HepG2 (cell line): ENCODE measurements at regions of chr12 and their contacts with region 1.

Region 1: DNA sequence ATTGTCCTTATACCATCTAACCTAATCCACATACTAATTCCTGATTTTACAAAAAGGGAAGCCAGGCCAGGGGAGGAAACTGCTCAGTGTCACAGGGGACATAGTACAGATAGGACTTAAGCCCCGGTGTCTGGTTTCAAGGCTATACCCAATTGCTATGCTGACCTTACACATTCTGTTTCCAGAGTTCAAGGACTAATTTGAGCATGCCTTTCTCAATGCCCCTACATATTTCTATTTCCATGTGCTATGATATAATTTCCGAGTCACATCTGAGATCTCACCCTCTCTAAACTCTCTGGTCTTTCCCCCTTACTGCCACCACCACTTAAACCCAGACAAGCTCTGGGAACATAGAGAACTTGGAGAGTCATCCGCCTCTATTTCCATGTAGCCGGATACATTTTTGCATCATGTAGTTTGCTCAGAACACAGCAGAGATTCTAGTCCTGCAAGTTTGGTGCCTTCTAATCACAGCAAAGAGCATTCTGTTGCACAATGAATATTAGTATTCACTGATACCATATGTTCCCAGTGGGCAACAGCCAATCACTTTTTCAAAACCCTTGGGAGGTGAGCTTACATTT is 34.2 kb downstream of the PPM1H start:
- DNase-seq: peak; percentile 91
- ATAC-seq: peak; percentile 94
- H3K4me3 ChIP-seq: no peak overlapping the region
- H3K27ac ChIP-seq: peak overlapping the region; percentile 87
- H3K4me1 ChIP-seq: peaks cover 66% of the 10 kb centered on the region
- H3K27me3 ChIP-seq: no peaks in the 10 kb centered on the region
- CTCF ChIP-seq: no peak
- EP300 ChIP-seq: peak in 1 of 2 experiments; percentile 87; a peak in 2 of 4 replicates
- POLR2A ChIP-seq: no peak; a peak in 1 of 4 replicates
- RAD21 ChIP-seq: no peak

Region 2: DNA sequence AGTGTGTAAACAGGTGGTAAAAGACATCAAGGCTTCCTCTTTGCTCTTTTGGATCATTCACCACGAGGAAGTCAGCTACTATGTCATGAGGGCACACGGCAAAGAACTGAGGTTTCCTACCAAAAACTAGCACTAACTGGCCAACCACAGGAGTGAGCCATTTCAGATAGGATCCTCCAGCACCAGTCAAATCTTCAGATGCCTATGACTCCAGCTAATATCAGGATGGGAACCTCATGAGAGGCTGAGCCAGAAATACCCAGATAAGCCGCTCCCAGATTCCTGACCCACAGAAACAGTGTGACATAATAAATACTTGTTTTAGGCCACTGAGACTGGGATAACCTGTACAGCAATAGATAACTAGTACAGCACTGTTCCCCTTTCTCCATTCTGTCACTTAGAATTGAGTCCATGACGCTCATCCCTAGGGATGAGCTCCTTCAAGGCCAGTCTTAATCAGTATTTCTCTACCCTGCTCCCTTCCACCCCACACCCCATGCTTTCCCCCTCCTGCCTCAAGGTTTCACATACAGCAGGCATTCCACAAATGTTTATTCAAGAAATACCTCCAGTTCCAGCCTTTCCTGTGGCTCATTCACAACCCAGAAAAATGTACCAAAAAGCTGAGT is 34.2 kb before region 1 on chr12:
- CTCF ChIA-PET with region 1: no interaction called
- POLR2A ChIA-PET with region 1: interaction called, 3 read pairs
- in situ Hi-C with region 1: no loop called
- intact Hi-C with region 1: loop called (anchors 2 kb)
- DNase-seq: peak; percentile 68
- ATAC-seq: peak; percentile 95
- H3K4me3 ChIP-seq: peak overlapping the region in 1 of 3 experiments; percentile 10; a peak in 1 of 6 replicates
- H3K27ac ChIP-seq: peak overlapping the region; percentile 35
- H3K4me1 ChIP-seq: peaks cover 74% of the 10 kb centered on the region
- H3K27me3 ChIP-seq: no peaks in the 10 kb centered on the region
- CTCF ChIP-seq: no peak
- EP300 ChIP-seq: no peak
- POLR2A ChIP-seq: no peak
- RAD21 ChIP-seq: no peak